Posterior cingulate gyrus (tissue), 11 donors: ENCODE measurements at regions of chr19 and their contacts with region 1.

Region 1: GRCh38 chr19:13952154-13953035 is at the start of gene DCAF15:
- DNase-seq: peak; percentile 99 to 100 (median 100)

Region 2: DNA sequence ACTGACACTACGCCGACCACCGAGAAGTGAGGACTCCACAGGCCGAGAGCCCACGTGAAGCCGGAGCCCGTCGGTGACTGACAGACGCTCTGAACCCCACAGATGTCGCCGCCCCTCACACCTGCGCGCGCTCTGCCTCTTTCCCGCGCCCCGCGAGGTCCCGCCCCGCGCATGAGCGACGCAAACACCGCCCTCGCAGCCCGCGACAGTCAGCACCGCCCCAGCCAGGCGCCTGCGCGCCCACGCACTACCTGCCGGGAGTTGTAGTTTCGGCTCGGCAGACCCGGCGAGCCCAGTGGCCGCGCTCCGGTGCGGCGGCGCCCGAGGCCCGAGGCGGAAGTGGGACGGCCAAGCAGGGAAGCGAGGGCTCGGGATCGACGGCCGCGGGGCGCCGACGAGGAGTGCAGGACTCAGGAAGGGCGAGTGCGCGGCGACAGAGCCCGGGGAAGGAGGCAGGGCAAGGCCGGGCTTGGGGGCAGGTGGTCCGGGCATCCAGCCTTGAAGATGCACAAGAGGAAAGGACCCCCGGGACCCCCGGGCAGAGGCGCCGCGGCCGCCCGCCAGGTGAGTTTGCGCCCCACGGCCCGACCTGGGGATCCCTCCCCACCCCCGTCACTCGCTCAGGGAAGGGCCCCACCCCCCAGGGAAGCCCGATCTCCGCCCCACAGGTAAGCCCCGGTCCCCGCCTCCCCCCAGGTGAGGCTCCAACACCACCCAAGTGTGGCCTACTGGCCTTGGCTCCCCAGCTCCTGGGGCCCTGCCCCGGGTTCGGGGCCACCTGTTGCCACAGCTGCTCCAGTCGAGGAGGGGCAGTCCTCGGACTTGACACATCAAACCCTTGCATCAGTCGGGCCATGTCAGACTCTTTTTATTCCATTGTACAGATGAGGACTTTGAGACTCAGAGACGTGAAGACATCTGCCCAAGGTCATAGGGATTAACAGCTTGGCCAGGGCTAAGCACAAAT is 46.2 kb before region 1 on chr19 and contains the starts of genes BRME1 and CC2D1A:
- intact Hi-C with region 1: loop called (anchors 10 kb)
- DNase-seq: peak; percentile 90 to 99 (median 96)

Region 3: GRCh38 chr19:13935765-13936510 is 16.5 kb before region 1 on chr19:
- intact Hi-C with region 1: no loop called
- DNase-seq: no peak

Region 4: GRCh38 chr19:14006243-14006765 is 53.9 kb after region 1 on chr19 and contains the start of gene RFX1:
- intact Hi-C with region 1: loop called (anchors 5 kb)
- DNase-seq: peak; percentile 98 to 100 (median 100)